CD4-positive, alpha-beta T cell (primary cell): ENCODE measurements at regions of chr1 and their contacts with region 1.

Region 1: GRCh38 chr1:169367486-169368405 is at the starts of genes BLZF1 and NME7:
- DNase-seq: peak; percentile 95 to 99 (median 98)
- ATAC-seq: peak; percentile 95
- H3K4me3 ChIP-seq: peak within 1 kb of the TSS; percentile 65
- H3K4me3 Mint-ChIP-seq: no peak within 1 kb of the TSS
- H3K27ac ChIP-seq: peak within 1 kb of the TSS; percentile 89 to 94
- H3K27ac Mint-ChIP-seq: no peak within 1 kb of the TSS
- H3K4me1 ChIP-seq: peaks cover 8% of the 10 kb centered on the region
- H3K4me1 Mint-ChIP-seq: peaks cover 33% of the 10 kb centered on the region
- H3K27me3 ChIP-seq: no peaks in the 10 kb centered on the region
- H3K27me3 Mint-ChIP-seq: no peaks in the 10 kb centered on the region
- CTCF ChIP-seq: no peak
- total RNA-seq, gene BLZF1: 10.0 to 10.6 TPM
- total RNA-seq, gene NME7: 7.2 to 8.3 TPM

Region 2: DNA sequence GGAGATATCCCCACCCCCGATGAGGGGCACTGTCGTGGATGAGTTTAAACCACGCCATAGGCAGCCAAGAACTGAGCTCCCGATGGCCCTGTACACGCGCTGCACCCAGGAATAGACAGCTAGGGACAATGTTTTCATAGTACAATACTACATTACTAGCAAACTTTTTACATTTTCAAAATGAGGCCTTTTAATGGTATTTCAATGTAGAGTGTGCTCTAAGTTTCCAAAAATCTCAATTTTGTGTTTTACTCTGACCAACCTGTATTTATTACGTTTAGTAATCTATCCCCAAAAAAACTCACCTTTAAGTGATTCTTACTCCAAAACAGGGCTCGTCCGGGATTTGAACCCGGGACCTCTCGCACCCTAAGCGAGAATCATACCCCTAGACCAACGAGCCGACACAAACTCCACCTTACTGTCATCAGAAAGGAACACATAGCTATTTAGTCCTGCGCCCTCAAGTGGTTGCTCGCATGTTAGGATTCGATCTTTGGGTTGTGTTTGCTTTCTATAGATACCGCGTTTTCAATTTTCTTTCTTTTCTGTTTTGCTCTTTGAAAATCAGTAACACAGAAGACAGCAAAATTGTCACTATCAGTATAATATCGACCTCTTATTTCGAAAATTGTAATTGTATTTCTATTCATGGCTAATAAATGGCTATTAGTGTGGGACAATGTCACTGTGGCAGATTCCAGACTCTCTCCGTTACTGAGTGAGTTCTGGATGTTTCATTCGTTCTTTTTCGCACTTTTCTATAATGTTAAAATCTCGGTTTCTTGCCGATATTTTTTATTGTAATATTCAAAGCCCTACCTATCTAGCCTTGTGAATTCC is 1652.4 kb before region 1 on chr1:
- CTCF ChIA-PET with region 1: no interaction called
- POLR2A ChIA-PET with region 1: no interaction called
- intact Hi-C with region 1: loop called in 1 of 2 experiments (anchors 10 kb)
- DNase-seq: peak; percentile 75 to 94 (median 84)
- ATAC-seq: peak; percentile 59
- H3K4me3 ChIP-seq: peak overlapping the region; percentile 79
- H3K4me3 Mint-ChIP-seq: peak overlapping the region; percentile 92
- H3K27ac ChIP-seq: peak overlapping the region in 1 of 2 donors; percentile 27
- H3K27ac Mint-ChIP-seq: peak overlapping the region; percentile 87
- H3K4me1 ChIP-seq: peaks cover 39% of the 10 kb centered on the region
- H3K4me1 Mint-ChIP-seq: peaks cover 47% of the 10 kb centered on the region
- H3K27me3 ChIP-seq: no peaks in the 10 kb centered on the region
- H3K27me3 Mint-ChIP-seq: peaks cover 18% of the 10 kb centered on the region
- CTCF ChIP-seq: peak; percentile 92

Region 3: DNA sequence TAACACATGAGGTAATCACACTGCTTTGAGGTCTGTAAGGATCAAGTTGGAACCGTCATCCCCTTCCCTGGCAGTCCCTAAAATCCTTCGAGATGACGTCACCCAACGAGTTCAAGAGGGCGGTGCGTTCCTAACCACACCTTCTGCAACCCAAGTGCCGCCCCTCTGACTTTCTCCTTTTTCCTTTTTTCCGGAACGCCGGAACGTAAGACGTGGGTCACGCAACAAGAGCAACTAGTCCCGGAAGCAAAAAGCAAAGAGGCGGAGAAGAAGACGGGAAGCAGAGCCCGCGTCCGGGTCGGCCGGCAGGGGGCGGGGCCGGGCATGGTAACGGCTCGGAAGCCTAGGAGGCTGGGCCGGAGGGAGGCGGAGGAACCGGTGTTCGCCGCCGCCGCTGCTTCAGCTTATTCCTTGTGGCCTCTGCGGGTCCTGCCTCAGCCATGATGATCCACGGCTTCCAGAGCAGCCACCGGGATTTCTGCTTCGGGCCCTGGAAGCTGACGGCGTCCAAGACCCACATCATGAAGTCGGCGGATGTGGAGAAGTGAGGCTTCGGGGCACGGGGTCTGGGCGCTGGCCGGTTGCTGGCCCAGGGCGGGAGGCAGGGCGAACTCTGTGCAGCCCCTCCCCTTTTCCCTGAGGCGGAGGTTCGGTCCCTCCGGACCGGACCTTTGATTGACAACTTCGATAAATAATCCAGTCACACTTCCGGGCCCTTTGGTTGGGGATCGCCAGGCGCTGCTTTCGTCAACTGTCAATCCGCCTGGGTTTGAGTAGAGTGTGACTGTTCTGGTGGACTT is 1188.9 kb before region 1 on chr1 and contains the start of gene TIPRL:
- CTCF ChIA-PET with region 1: no interaction called
- POLR2A ChIA-PET with region 1: no interaction called
- intact Hi-C with region 1: loop called (anchors 5 to 10 kb)
- DNase-seq: peak; percentile 85 to 97 (median 92)
- ATAC-seq: peak; percentile 89
- H3K4me3 ChIP-seq: peak within 1 kb of the TSS; percentile 89
- H3K4me3 Mint-ChIP-seq: no peak within 1 kb of the TSS
- H3K27ac ChIP-seq: peak within 1 kb of the TSS; percentile 95 to 96
- H3K27ac Mint-ChIP-seq: no peak within 1 kb of the TSS
- H3K4me1 ChIP-seq: peaks cover 22% of the 10 kb centered on the region
- H3K4me1 Mint-ChIP-seq: peaks cover 15% of the 10 kb centered on the region
- H3K27me3 ChIP-seq: no peaks in the 10 kb centered on the region
- H3K27me3 Mint-ChIP-seq: peaks cover 12% of the 10 kb centered on the region
- CTCF ChIP-seq: peak; percentile 63
- total RNA-seq, gene TIPRL: 15.8 to 16.4 TPM

Region 4: GRCh38 chr1:168342572-168343280 is 1025.0 kb before region 1 on chr1:
- CTCF ChIA-PET with region 1: interaction called, 3 read pairs
- POLR2A ChIA-PET with region 1: interaction called, 6 read pairs
- intact Hi-C with region 1: loop called (anchors 5 kb)
- DNase-seq: peak; percentile 83 to 96 (median 86)
- ATAC-seq: peak; percentile 99
- H3K4me3 ChIP-seq: no peak overlapping the region
- H3K4me3 Mint-ChIP-seq: peak overlapping the region; percentile 61
- H3K27ac ChIP-seq: no peak overlapping the region
- H3K27ac Mint-ChIP-seq: peak overlapping the region; percentile 90
- H3K4me1 ChIP-seq: peaks cover 19% of the 10 kb centered on the region
- H3K4me1 Mint-ChIP-seq: peaks cover 34% of the 10 kb centered on the region
- H3K27me3 ChIP-seq: no peaks in the 10 kb centered on the region
- H3K27me3 Mint-ChIP-seq: no peaks in the 10 kb centered on the region
- CTCF ChIP-seq: peak; percentile 83

Region 5: GRCh38 chr1:168696125-168696760 is 671.5 kb before region 1 on chr1:
- CTCF ChIA-PET with region 1: no interaction called
- POLR2A ChIA-PET with region 1: no interaction called
- intact Hi-C with region 1: no loop called
- DNase-seq: no peak
- ATAC-seq: no peak
- H3K4me3 ChIP-seq: no peak overlapping the region
- H3K4me3 Mint-ChIP-seq: no peak overlapping the region
- H3K27ac ChIP-seq: no peak overlapping the region
- H3K27ac Mint-ChIP-seq: no peak overlapping the region
- H3K4me1 ChIP-seq: no peaks in the 10 kb centered on the region
- H3K4me1 Mint-ChIP-seq: no peaks in the 10 kb centered on the region
- H3K27me3 ChIP-seq: no peaks in the 10 kb centered on the region
- H3K27me3 Mint-ChIP-seq: no peaks in the 10 kb centered on the region
- CTCF ChIP-seq: no peak

Region 6: DNA sequence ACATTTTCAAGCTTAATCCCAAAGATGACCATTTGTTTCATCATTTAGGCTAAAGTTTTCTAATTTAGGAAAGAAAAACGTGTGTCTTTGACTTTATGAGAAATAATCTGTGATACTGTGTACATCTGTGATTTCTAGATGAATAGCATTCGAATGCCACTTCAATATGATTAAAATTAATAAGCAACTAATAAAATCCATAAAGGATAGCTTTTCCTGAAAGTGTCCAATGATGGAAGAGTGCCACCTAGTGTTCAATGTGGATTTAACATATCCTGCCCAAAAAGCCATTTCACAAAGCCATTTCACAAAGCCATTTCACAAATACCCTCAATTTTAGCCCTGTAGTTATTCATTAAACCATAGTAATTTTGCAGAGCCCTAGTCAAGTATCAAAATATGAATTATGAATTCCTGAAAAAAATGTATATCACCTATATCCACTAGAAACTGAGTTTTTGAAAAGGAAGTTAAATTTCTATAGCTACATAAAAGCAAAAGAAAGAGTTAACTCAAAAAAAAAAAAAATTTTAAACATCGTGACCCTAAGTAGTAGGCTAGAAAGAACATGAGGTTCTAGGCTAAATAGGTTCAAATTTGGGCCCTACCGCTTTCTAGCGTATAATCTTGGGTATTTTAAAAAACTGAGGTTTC is 19.2 kb before region 1 on chr1:
- CTCF ChIA-PET with region 1: interaction called, 13 read pairs
- POLR2A ChIA-PET with region 1: no interaction called
- intact Hi-C with region 1: no loop called
- DNase-seq: peak in 4 of 14 experiments; percentile 38 to 79 (median 68)
- ATAC-seq: peak; percentile 46
- H3K4me3 ChIP-seq: no peak overlapping the region
- H3K4me3 Mint-ChIP-seq: no peak overlapping the region
- H3K27ac ChIP-seq: no peak overlapping the region
- H3K27ac Mint-ChIP-seq: no peak overlapping the region
- H3K4me1 ChIP-seq: no peaks in the 10 kb centered on the region
- H3K4me1 Mint-ChIP-seq: no peaks in the 10 kb centered on the region
- H3K27me3 ChIP-seq: no peaks in the 10 kb centered on the region
- H3K27me3 Mint-ChIP-seq: no peaks in the 10 kb centered on the region
- CTCF ChIP-seq: peak; percentile 92

Region 7: GRCh38 chr1:169711469-169712281 is 343.9 kb after region 1 on chr1 and contains the start of gene SELL:
- CTCF ChIA-PET with region 1: no interaction called
- POLR2A ChIA-PET with region 1: no interaction called
- intact Hi-C with region 1: loop called (anchors 5 to 10 kb)
- DNase-seq: peak; percentile 53 to 90 (median 70)
- ATAC-seq: peak; percentile 67
- H3K4me3 ChIP-seq: peak within 1 kb of the TSS; percentile 58
- H3K4me3 Mint-ChIP-seq: peak within 1 kb of the TSS; percentile 93
- H3K27ac ChIP-seq: peak within 1 kb of the TSS; percentile 56 to 74
- H3K27ac Mint-ChIP-seq: no peak within 1 kb of the TSS
- H3K4me1 ChIP-seq: peaks cover 6% of the 10 kb centered on the region
- H3K4me1 Mint-ChIP-seq: peaks cover 22% of the 10 kb centered on the region
- H3K27me3 ChIP-seq: no peaks in the 10 kb centered on the region
- H3K27me3 Mint-ChIP-seq: no peaks in the 10 kb centered on the region
- CTCF ChIP-seq: peak; percentile 89
- total RNA-seq, gene SELL: 204 to 216 TPM

Region 8: DNA sequence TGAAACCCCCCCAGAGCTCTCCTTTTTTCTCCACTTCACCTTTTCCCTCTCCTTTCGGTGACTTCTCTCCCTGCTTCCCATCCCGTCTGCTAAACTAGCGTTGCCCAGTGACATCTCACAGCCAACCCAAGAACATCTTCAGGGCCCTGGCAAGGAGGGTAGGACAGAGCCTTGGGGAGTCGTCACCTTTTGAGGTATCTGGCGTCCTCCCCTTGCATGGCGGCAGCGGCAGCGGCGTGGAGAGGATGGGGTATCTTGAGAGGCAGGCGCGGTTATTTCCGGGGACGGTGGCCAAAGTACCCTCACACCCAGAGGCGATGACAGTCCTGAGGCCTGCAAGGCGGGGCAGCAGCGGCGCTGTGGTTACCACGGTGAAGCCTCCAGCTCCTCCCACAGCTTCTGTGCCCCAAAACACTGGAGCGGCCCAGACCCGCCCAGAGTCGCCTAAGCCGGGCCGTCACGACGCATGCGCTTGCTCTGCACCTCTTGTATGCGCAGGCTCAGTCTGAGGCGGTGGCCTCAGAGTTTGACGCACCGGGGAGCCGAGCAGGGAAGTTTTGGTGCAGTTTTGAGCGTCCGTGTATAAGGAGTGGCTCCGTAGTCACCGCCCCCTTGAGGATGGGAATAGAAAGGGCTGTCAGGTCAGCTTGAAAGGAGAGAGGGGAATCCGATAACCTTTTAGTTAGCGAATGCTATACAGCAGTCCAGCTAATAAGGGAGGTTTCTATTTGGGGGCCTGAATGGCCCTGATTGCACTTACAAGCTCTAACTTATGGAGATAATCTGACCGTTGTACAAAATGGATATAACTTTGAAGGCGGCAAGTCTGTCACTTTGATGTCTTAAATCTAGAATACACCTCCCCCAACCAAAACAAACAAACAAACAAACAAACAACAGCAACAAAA is 706.8 kb after region 1 on chr1 and contains the start of gene KIFAP3:
- CTCF ChIA-PET with region 1: interaction called, 4 read pairs
- POLR2A ChIA-PET with region 1: no interaction called
- intact Hi-C with region 1: loop called in 1 of 2 experiments (anchors 5 kb)
- DNase-seq: peak; percentile 88 to 99 (median 93)
- ATAC-seq: peak; percentile 95
- H3K4me3 ChIP-seq: peak within 1 kb of the TSS; percentile 83
- H3K4me3 Mint-ChIP-seq: peak within 1 kb of the TSS; percentile 97
- H3K27ac ChIP-seq: peak within 1 kb of the TSS; percentile 77 to 83
- H3K27ac Mint-ChIP-seq: peak within 1 kb of the TSS; percentile 85
- H3K4me1 ChIP-seq: peaks cover 15% of the 10 kb centered on the region
- H3K4me1 Mint-ChIP-seq: peaks cover 54% of the 10 kb centered on the region
- H3K27me3 ChIP-seq: no peaks in the 10 kb centered on the region
- H3K27me3 Mint-ChIP-seq: no peaks in the 10 kb centered on the region
- CTCF ChIP-seq: peak; percentile 69
- total RNA-seq, gene KIFAP3: 12.1 to 12.6 TPM